ENCODE measurements at regions of chr7 and their contacts with region 1.

Region 1: GRCh38 chr7:2734751-2735571 is 47.0 kb downstream of the AMZ1 start:
- DNase-seq: peak in 4 of 10 donors; percentile 17 to 45 (median 34)
- H3K4me3 ChIP-seq: no peak overlapping the region
- H3K27ac ChIP-seq: peak overlapping the region in 49 of 59 donors; percentile 5 to 90 (median 60)
- H3K27me3 ChIP-seq: no peaks in the 10 kb centered on the region
- CTCF ChIP-seq: no peak

Region 2: DNA sequence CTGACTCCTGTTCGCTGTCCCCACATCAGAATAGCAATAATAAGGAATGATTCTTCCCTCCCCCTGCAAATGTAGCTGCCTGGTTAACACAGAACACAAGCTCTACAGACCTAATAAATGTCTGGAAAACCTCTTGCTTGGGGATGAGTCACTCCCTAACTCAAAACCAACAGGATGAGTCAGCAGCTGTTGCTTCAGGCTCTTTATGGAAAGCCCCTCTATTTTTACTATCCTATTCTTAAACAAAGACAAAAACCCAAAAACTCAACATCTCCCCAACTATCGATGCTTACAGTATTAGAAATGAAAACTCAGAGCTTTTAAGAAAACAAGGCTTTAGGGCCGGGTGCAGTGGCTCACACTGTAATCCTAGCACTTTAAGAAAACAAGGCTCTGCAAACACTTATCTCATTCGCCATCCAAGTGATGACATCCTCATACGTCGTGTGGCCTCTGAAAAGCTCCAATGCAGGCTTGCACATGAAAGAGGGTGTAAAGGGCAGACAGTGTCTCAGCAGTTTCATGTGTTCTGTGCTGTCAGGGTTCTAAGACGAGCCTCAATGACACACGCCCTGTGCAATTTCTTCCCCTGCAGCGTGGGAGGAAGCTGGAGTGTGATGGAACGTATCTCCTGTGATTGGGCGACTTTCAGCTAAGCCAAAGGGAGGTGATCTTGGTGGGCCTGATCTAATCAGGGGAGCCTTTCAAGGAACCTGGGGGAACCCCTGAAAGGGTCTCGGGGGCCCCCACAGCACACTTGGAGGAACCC is 23.1 kb after region 1 on chr7:
- intact Hi-C with region 1: loop called in 1 of 2 experiments (anchors 2 kb)
- DNase-seq: peak in 1 of 10 donors; percentile 36
- H3K4me3 ChIP-seq: peak overlapping the region in 13 of 59 donors; percentile 1 to 33 (median 16)
- H3K27ac ChIP-seq: peak overlapping the region in 58 of 59 donors; percentile 15 to 98 (median 84)
- H3K27me3 ChIP-seq: no peaks in the 10 kb centered on the region
- CTCF ChIP-seq: no peak